ENCODE measurements at regions of chr4 and their contacts with region 1.

Region 1: DNA sequence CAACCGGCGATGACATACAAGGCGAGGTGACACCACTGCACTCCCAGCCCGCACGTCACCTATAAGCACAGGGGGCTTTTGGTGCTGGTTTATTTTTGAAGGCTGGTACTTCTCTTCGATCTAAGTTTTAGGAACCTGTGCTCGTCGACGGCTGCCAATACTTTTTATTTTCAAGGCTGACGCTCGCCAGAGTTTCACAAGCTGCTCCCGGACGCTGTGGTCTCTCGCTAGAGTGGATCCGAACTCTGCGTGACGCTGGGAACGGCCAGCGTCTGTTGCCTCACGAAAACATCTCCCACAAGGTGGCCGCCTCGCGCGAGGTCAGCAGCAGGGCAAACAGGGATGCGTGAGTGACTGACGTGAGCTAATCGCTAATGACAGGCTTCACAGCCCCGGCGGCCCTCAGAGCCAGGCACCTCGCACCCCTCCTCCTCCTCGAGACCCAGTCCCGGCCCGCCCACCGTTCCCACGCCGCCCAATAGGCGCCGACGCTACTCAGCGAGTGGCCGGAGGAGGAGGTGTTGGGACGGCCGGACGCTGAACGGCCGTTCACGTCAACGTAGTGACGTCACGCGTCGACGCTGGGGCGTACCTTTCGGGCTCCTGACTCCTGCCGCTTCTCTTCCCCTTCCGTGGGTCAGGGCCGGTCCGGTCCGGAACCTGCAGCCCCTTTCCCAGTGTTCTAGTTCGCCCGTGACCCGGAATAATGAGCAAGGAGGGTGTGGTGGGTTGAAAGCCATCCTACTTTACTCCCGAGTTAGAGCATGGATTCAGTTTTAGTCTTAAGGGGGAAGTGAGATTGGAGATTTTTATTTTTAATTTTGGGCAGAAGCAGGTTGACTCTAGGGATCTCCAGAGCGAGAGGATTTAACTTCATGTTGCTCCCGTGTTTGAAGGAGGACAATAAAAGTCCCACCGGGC is at the start of gene CLCN3:
- DNase-seq: peak; percentile 97 to 98
- H3K4me3 ChIP-seq: peak within 1 kb of the TSS; percentile 67 to 88
- H3K27ac ChIP-seq: peak within 1 kb of the TSS; percentile 94 to 96
- H3K4me1 ChIP-seq: peaks cover 0 to 8% of the 10 kb centered on the region in 2 donors
- H3K27me3 ChIP-seq: no peaks in the 10 kb centered on the region
- CTCF ChIP-seq: peak in 3 of 4 experiments; percentile 15 to 47 (median 33)
- POLR2A ChIP-seq: peak; percentile 91 to 97
- total RNA-seq, gene CLCN3: 12.4 to 57.3 (median 33.5) TPM

Region 2: GRCh38 chr4:169854090-169854489 is 233.9 kb after region 1 on chr4:
- intact Hi-C with region 1: no loop called
- DNase-seq: no peak
- H3K4me3 ChIP-seq: no peak overlapping the region
- H3K27ac ChIP-seq: no peak overlapping the region
- H3K4me1 ChIP-seq: no peaks in the 10 kb centered on the region
- H3K27me3 ChIP-seq: no peaks in the 10 kb centered on the region
- CTCF ChIP-seq: no peak
- POLR2A ChIP-seq: no peak

Region 3: GRCh38 chr4:170027181-170027829 is 407.1 kb after region 1 on chr4:
- intact Hi-C with region 1: loop called (anchors 10 kb)
- DNase-seq: peak; percentile 95 to 96
- H3K4me3 ChIP-seq: peak overlapping the region; percentile 89 to 92
- H3K27ac ChIP-seq: peak overlapping the region; percentile 91 to 94
- H3K4me1 ChIP-seq: no peaks in the 10 kb centered on the region
- H3K27me3 ChIP-seq: no peaks in the 10 kb centered on the region
- CTCF ChIP-seq: peak in 2 of 4 experiments; percentile 4 to 32
- POLR2A ChIP-seq: peak in 1 of 2 donors; percentile 64

Measured in uterus (tissue), 4 donors.